MCF 10A (cell line): ENCODE measurements at regions of chr3 and their contacts with region 1.

Region 1: GRCh38 chr3:159458010-159458409 is 530.6 kb upstream of the IL12A start:
- DNase-seq: peak; percentile 85
- H3K4me3 Mint-ChIP-seq: no peak overlapping the region
- H3K27ac Mint-ChIP-seq: peak overlapping the region; percentile 5
- H3K4me1 Mint-ChIP-seq: peaks cover 15% of the 10 kb centered on the region
- H3K27me3 Mint-ChIP-seq: no peaks in the 10 kb centered on the region
- CTCF ChIP-seq: no peak

Region 2: GRCh38 chr3:159018341-159018740 is 439.7 kb before region 1 on chr3:
- CTCF ChIA-PET with region 1: no interaction called
- POLR2A ChIA-PET with region 1: no interaction called
- intact Hi-C with region 1: no loop called
- DNase-seq: no peak
- H3K4me3 Mint-ChIP-seq: no peak overlapping the region
- H3K27ac Mint-ChIP-seq: no peak overlapping the region
- H3K4me1 Mint-ChIP-seq: no peaks in the 10 kb centered on the region
- H3K27me3 Mint-ChIP-seq: no peaks in the 10 kb centered on the region
- CTCF ChIP-seq: no peak

Region 3: GRCh38 chr3:159322322-159322939 is 135.6 kb before region 1 on chr3:
- CTCF ChIA-PET with region 1: interaction called, 5 read pairs
- POLR2A ChIA-PET with region 1: no interaction called
- intact Hi-C with region 1: loop called (anchors 2 kb)
- DNase-seq: peak; percentile 40
- H3K4me3 Mint-ChIP-seq: no peak overlapping the region
- H3K27ac Mint-ChIP-seq: no peak overlapping the region
- H3K4me1 Mint-ChIP-seq: no peaks in the 10 kb centered on the region
- H3K27me3 Mint-ChIP-seq: no peaks in the 10 kb centered on the region
- CTCF ChIP-seq: peak; percentile 60